Right cardiac atrium (tissue), 5 donors: ENCODE measurements at regions of chr3 and their contacts with region 1.

Region 1: GRCh38 chr3:52339612-52340011 is 23.5 kb downstream of the DNAH1 start:
- DNase-seq: peak in 2 of 3 donors; percentile 1 to 24
- ATAC-seq: peak; percentile 53 to 55
- H3K4me3 ChIP-seq: no peak overlapping the region
- H3K27ac ChIP-seq: no peak overlapping the region
- H3K4me1 ChIP-seq: no peaks in the 10 kb centered on the region
- H3K27me3 ChIP-seq: no peaks in the 10 kb centered on the region

Region 2: DNA sequence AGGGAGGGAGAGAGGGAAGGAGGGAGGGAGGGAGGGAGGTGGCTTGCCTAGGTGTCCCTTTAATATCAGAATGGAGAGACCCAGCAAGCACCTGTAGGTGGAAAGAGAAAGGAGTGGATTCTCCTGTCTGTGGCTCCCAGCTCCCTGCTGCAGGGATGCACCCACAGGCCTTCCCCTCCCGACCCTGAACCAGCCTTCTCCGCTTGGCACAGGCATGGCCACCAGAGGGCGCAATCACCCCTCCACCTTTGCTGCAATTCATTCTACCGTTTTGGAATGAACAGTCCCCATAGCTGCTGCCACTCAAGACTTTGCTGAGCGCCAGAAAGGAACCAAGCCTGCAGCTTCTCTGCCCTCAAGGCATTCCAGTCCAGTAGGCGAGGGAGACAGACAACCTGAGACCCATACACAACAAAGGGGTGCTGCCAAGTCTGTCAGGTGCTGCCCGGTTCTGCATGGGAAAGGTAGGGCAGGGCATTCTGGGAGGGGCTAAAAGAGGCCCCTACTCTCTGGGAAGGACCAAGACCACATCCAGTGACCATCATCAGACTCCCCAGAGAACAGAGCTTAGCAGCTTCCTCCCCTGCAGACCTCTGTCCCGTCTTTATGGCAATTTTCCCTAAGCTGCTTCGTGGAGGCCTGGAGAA is 119.1 kb before region 1 on chr3:
- intact Hi-C with region 1: loop called in 3 of 4 experiments (anchors 5 kb)
- DNase-seq: peak; percentile 83 to 94 (median 94)
- ATAC-seq: peak; percentile 40 to 56
- H3K4me3 ChIP-seq: no peak overlapping the region
- H3K27ac ChIP-seq: no peak overlapping the region
- H3K4me1 ChIP-seq: peaks cover 15% of the 10 kb centered on the region
- H3K27me3 ChIP-seq: no peaks in the 10 kb centered on the region

Region 3: GRCh38 chr3:52231502-52232293 is 107.9 kb before region 1 on chr3:
- intact Hi-C with region 1: loop called in 1 of 4 experiments (anchors 5 kb)
- DNase-seq: peak; percentile 77 to 91 (median 89)
- ATAC-seq: peak; percentile 12 to 38
- H3K4me3 ChIP-seq: no peak overlapping the region
- H3K27ac ChIP-seq: no peak overlapping the region
- H3K4me1 ChIP-seq: peaks cover 10% of the 10 kb centered on the region
- H3K27me3 ChIP-seq: no peaks in the 10 kb centered on the region

Region 4: GRCh38 chr3:52291508-52292181 is 48.0 kb before region 1 on chr3:
- intact Hi-C with region 1: loop called (anchors 2 to 5 kb)
- DNase-seq: peak in 2 of 3 donors; percentile 11 to 46
- ATAC-seq: no peak
- H3K4me3 ChIP-seq: no peak overlapping the region
- H3K27ac ChIP-seq: no peak overlapping the region
- H3K4me1 ChIP-seq: peaks cover 4% of the 10 kb centered on the region
- H3K27me3 ChIP-seq: no peaks in the 10 kb centered on the region

Region 5: DNA sequence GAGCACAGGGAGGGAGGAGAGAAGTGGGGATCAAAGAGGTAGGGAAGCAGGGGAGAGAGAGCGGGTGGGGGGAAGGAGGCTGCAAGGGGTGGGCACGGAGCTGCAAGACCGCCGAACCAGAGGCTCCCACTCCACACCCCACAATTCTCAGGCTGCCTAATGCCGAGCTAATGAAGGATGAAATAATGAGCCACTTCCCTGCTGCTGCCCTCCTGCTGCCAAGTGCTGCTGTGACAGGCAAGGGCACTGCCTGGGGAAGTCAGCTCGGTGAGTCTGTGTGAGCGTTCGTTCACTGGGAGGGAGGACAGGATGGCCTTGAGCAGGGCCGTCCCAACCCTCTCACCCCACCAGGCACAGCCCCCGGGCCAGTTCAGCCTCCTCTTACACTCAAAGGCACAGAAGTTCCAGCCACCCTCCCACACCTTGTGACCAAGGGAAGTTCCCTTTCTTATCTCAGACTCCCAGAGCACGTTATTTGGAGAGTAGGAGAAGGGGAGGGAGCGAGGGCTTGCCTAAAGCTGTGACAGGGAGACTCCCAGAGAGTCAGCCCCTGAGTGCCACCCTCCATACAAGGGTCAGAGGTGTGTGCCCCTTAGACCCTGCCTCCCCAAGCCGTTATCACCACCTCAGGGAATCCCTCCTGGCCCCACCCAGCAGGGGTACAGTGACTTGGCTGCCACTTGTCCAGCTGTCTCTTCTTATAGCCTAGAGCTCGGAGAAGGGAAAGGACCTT is 39.6 kb before region 1 on chr3:
- intact Hi-C with region 1: loop called in 1 of 4 experiments (anchors 2 kb)
- DNase-seq: peak; percentile 58 to 81 (median 74)
- ATAC-seq: peak; percentile 81 to 83
- H3K4me3 ChIP-seq: no peak overlapping the region
- H3K27ac ChIP-seq: peak overlapping the region; percentile 59
- H3K4me1 ChIP-seq: peaks cover 6% of the 10 kb centered on the region
- H3K27me3 ChIP-seq: no peaks in the 10 kb centered on the region

Region 6: DNA sequence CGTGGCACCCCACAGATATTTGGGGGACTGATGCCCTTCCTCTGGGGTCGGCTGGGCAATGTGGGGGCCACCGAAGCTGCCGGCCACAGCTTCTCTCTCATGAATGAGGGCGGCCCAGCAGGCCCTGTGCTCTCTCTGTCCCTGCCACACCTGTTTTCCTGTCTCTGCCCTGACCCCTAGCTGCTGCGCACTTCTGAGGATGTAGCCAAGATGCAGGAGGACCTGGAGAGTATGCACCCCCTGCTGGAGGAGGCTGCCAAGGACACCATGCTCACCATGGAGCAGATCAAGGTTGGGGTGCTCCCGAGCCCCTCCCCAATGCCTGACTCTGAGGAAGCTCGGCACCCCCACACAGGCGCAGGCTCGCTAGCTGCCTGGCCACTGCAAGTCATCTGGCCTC is 45.5 kb after region 1 on chr3:
- intact Hi-C with region 1: no loop called
- DNase-seq: no peak
- ATAC-seq: no peak
- H3K4me3 ChIP-seq: no peak overlapping the region
- H3K27ac ChIP-seq: no peak overlapping the region
- H3K4me1 ChIP-seq: no peaks in the 10 kb centered on the region
- H3K27me3 ChIP-seq: no peaks in the 10 kb centered on the region